ENCODE measurements at regions of chr20 and their contacts with region 1.

Region 1: DNA sequence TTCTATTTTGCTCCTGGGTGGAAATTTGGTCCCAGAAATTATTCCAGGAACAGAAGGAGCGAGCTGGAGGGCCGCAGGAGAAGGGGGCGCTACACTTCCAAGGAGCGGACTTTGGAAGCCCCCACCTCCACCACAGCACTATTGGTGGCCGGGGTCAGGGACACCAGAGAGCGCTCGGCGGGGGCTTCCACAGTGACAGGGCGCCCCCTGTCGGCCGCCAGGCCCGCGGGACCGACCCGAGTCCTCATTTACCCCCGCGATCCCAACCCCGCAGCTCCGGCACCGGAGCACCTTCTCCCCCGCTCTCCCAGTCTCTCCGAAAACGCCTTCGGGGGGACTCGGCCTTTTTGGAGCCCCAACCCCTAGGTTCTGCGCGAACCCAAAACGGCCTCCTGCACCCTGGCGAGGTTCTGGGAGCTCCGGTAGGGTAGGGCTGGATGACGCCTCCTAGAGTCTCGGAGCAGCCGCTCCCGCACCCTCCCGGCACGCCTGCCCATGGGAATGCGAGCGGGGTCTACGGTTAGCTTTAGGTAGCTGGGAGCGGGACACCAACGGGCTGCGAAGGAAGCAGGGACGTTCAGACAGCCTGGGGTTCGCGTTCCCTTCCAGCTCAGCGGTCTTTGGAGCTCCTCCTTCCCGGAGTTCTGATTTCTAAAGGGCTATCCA is 2.4 kb upstream of the FOXA2 start:
- DNase-seq: peak; percentile 59
- ATAC-seq: no peak
- H3K4me3 Mint-ChIP-seq: no peak overlapping the region
- H3K27ac Mint-ChIP-seq: no peak overlapping the region
- H3K4me1 Mint-ChIP-seq: no peaks in the 10 kb centered on the region
- H3K27me3 Mint-ChIP-seq: peaks cover 59% of the 10 kb centered on the region

Region 2: GRCh38 chr20:21520702-21521595 is 1065.8 kb before region 1 on chr20:
- CTCF ChIA-PET with region 1: no interaction called
- POLR2A ChIA-PET with region 1: no interaction called
- intact Hi-C with region 1: loop called in 1 of 2 experiments (anchors 5 kb)
- DNase-seq: peak; percentile 23
- ATAC-seq: no peak
- H3K4me3 Mint-ChIP-seq: no peak overlapping the region
- H3K27ac Mint-ChIP-seq: no peak overlapping the region
- H3K4me1 Mint-ChIP-seq: peaks cover 26% of the 10 kb centered on the region
- H3K27me3 Mint-ChIP-seq: peaks cover 86% of the 10 kb centered on the region

Region 3: DNA sequence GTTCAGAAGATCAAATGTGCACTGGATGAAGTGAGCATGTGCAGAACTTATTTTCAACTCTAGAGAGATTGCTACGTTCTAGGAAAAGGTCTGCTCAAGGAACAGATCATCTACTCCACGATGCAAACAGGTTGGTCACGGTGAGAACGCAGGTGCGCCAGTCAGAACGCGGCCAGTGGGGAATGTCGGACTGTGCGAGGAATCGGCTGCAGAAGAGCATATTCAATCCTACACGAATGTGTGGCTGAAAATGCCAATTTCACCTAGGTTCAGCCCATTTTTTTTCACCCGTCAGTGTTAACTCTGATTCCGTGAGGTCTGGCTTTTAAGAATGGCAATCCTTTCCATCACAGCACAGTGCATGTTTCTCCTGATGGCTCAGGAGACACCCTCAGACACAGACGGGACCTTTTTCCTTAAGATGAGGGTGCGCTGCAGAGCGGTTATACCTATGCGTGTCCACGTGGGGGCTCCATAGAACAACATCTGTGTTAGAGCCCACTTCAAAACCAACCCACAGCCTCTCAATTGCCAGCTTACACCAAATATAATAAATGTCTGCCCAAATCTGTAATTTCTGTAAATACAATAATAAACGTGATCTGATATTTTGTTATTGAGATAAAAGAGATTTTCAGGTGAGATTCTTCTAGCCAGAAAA is 252.8 kb before region 1 on chr20:
- CTCF ChIA-PET with region 1: interaction called, 11 read pairs
- POLR2A ChIA-PET with region 1: no interaction called
- intact Hi-C with region 1: loop called in 1 of 2 experiments (anchors 1 kb)
- DNase-seq: peak; percentile 68
- ATAC-seq: peak; percentile 51
- H3K4me3 Mint-ChIP-seq: no peak overlapping the region
- H3K27ac Mint-ChIP-seq: no peak overlapping the region
- H3K4me1 Mint-ChIP-seq: no peaks in the 10 kb centered on the region
- H3K27me3 Mint-ChIP-seq: peaks cover 13% of the 10 kb centered on the region

Region 4: GRCh38 chr20:22546344-22546743 is 40.4 kb before region 1 on chr20:
- CTCF ChIA-PET with region 1: no interaction called
- POLR2A ChIA-PET with region 1: no interaction called
- intact Hi-C with region 1: loop called in 1 of 2 experiments (anchors 10 kb)
- DNase-seq: no peak
- ATAC-seq: no peak
- H3K4me3 Mint-ChIP-seq: no peak overlapping the region
- H3K27ac Mint-ChIP-seq: no peak overlapping the region
- H3K4me1 Mint-ChIP-seq: no peaks in the 10 kb centered on the region
- H3K27me3 Mint-ChIP-seq: peaks cover 4% of the 10 kb centered on the region

Region 5: DNA sequence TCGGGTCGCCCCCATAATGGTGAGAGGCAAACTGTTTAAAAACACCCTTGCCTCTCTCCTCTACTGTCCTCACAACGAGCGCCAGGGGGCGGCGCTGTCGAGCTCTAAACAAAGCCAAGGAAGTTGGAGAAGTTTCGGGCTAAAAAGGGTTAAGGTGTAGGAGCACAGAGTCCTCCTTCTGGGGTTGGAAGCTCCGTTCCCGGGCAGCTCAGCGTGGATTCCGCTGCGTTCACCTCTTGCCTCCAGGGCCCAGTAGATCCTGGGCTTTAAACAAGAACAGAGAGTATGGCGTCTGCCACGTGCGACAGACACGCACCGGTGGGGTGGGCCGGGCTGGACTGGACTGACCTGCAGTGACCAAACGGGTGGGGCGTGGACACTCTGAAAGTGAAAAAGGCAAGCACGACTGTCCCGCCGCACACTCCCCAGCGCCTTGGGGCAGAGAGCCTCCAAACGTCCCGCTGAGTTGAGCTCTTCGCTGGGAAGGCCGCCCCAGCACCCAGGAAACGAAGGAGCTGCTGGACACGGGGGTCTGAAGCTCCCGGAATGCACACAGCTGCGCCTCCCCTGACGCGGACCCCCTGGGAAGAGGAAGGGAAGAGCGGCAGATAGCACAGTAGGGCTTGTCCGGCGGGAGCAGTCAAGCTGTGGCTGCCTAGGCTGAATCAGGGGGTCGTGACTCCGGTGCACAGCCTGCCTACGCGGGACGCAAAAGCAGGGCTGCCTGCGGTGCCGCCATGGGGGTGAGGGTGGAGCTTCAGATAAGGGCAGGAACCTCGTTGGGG is 464.3 kb after region 1 on chr20:
- CTCF ChIA-PET with region 1: no interaction called
- POLR2A ChIA-PET with region 1: no interaction called
- intact Hi-C with region 1: loop called in 1 of 2 experiments (anchors 2 kb)
- DNase-seq: peak; percentile 78
- ATAC-seq: peak; percentile 49
- H3K4me3 Mint-ChIP-seq: no peak overlapping the region
- H3K27ac Mint-ChIP-seq: no peak overlapping the region
- H3K4me1 Mint-ChIP-seq: peaks cover 5% of the 10 kb centered on the region
- H3K27me3 Mint-ChIP-seq: peaks cover 52% of the 10 kb centered on the region

Measured in activated CD4-positive, alpha-beta T cell treated with anti-CD3 and anti-CD28 coated beads for 36 hours (primary cell).